Sigmoid colon (tissue), 7 donors: ENCODE measurements at regions of chr11 and their contacts with region 1.

Region 1: GRCh38 chr11:35144136-35144741 is 5.3 kb downstream of the CD44 start:
- DNase-seq: no peak
- H3K4me3 ChIP-seq: peak overlapping the region in 1 of 4 donors; percentile 4
- H3K27ac ChIP-seq: peak overlapping the region in 3 of 4 donors; percentile 36 to 93 (median 92)
- H3K4me1 ChIP-seq: peaks cover 0 to 76% (median 62%) of the 10 kb centered on the region in 4 donors
- H3K27me3 ChIP-seq: no peaks in the 10 kb centered on the region
- CTCF ChIP-seq: no peak
- EP300 ChIP-seq: no peak
- POLR2A ChIP-seq: no peak

Region 2: DNA sequence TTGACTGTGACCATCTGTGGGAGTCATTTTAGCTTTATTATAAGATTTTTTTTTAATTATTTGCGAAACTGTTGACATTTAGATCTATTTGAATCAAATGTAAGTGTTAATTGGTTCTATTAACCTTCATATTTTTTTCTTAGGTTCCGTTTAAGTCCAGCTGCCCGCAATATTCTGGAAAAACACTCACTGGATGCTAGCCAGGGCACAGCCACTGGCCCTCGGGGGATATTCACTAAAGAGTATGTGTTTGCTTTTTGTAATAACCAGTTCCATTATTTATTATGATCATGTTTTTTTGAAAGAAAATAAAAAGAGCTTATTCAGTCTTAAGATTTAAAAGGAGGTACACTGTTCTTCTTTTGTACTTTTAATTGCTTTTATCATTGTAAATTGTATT is 184.0 kb before region 1 on chr11:
- intact Hi-C with region 1: no loop called
- DNase-seq: no peak
- H3K4me3 ChIP-seq: no peak overlapping the region
- H3K27ac ChIP-seq: no peak overlapping the region
- H3K4me1 ChIP-seq: no peaks in the 10 kb centered on the region
- H3K27me3 ChIP-seq: no peaks in the 10 kb centered on the region
- CTCF ChIP-seq: no peak
- EP300 ChIP-seq: no peak
- POLR2A ChIP-seq: no peak

Region 3: DNA sequence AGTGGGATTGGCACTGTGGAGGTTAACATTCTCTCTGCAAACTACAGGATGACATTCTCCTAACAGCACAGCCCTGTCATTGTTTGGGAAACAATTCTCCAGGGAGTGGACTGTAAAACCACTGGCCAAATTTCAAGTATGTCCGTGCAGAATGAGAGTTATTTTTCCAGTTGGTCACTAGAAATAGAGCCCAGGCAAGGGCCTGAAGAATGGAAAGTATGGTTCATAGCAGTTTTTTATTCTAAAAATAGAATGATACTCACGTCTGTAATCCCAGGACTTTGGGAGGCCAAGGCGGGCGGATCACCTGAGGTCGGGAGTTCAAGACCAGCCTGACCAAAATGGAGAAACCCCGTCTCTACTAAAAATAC is 44.2 kb before region 1 on chr11:
- intact Hi-C with region 1: loop called (anchors 5 kb)
- DNase-seq: no peak
- H3K4me3 ChIP-seq: no peak overlapping the region
- H3K27ac ChIP-seq: peak overlapping the region; percentile 74 to 90 (median 80)
- H3K4me1 ChIP-seq: peaks cover 0 to 54% (median 39%) of the 10 kb centered on the region in 4 donors
- H3K27me3 ChIP-seq: no peaks in the 10 kb centered on the region
- CTCF ChIP-seq: no peak
- EP300 ChIP-seq: peak in 3 of 4 donors; percentile 46 to 58 (median 56)
- POLR2A ChIP-seq: no peak

Region 4: DNA sequence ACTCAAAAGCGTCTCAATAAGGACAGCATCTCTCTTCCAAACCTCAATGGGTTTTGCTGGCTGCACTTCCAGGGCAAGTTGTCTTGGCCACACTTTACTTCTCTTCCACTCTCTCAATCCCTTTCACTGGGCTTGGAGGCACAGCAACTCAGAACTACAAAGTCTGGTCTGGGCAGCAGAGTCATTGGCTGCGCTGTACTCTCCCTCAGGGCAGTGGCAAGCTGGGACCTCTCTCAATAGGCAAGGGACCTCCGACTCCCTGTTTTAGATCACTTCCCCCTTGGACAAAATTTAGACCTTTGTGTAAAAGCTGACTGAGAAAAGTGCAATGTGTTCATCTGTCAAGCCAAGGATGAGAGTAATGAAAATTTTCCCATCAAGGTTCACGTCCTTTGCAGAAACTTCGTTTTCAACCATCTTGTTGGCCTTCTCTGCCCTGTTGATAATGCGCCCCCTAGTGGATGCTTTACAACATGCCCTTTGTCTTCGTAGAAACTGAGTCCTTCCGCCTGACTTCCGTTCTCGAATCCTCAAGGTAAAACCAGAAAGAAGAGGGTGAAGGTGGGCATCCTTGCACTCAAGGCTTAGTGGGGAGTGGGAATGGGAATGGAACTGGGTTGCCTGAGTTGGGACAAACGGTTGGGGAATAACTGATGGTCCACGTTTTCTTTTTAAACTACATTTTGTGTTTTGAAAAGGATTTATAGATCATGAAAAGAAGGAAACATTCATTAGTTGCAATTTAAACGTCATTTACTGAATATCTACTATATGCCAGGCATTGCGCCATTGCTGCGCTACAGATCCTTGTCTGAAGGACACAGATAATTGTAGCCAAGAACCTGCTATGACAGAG is 93.8 kb after region 1 on chr11:
- intact Hi-C with region 1: loop called (anchors 5 kb)
- DNase-seq: no peak
- H3K4me3 ChIP-seq: no peak overlapping the region
- H3K27ac ChIP-seq: no peak overlapping the region
- H3K4me1 ChIP-seq: peaks cover 0 to 28% (median 12%) of the 10 kb centered on the region in 4 donors
- H3K27me3 ChIP-seq: no peaks in the 10 kb centered on the region
- CTCF ChIP-seq: peak in 3 of 4 experiments; percentile 46 to 60 (median 49)
- EP300 ChIP-seq: no peak
- POLR2A ChIP-seq: no peak

Region 5: DNA sequence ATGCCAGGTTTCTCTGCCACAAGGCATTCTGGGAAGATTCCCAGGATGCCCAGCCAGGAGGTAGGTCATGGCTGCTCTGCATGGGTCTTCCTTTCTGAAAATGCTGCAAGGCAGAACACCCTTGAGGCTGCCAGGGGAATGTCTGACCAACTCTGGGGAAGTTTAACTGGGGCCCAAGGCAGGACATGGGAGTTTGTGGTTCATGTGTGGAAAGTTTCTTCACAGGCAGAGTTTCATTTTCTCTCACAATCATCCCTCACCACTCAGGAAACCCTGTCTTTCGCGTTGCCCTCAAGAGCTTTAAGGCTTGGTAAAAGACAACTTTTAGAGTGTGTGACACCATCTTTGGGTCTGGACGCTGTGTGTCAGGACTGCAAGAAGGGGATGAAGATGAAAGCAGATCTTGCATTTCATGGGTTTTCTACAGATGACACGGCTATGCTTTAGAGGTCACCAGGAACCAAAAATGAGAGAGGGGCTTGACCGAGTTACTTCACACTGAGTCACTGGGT is 128.2 kb after region 1 on chr11:
- intact Hi-C with region 1: no loop called
- DNase-seq: no peak
- H3K4me3 ChIP-seq: no peak overlapping the region
- H3K27ac ChIP-seq: no peak overlapping the region
- H3K4me1 ChIP-seq: peaks cover 0 to 18% (median 16%) of the 10 kb centered on the region in 4 donors
- H3K27me3 ChIP-seq: no peaks in the 10 kb centered on the region
- CTCF ChIP-seq: no peak
- EP300 ChIP-seq: no peak
- POLR2A ChIP-seq: no peak

Region 6: DNA sequence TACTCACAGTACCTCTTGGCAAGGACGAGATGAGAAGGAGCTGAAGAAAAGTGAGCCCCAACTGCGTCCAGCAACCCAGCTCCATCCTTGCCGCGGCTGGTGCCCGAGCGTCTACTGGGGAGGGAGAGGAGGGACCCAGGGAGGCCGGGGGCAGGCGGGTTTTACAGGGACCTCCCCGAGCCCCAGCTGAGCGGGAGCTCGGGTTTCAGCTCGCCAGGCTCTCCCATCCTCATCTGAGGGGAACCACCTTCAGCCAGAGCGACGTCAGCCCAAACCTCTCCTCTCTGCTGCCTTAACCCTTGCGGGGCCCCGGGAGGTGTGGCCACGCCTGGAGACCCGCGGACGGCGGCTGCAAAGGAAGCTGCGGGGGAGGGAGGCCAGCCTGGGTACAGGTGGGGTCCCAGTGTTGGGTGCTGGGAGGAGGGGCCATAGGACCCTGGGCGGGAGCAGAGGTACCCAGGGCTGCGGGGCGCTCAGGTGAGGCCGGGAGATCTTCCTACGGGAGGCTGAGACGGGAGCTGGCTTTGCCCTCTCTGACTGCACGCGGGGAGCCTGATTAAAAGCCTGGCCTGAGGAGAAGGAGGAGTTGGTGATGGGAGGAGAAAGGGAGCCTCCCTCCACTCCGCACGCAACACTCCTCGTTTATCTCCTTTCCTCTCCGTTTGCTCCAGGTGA is 381.4 kb after region 1 on chr11 and contains the start of gene PAMR1:
- intact Hi-C with region 1: no loop called
- DNase-seq: peak; percentile 89
- H3K4me3 ChIP-seq: peak within 1 kb of the TSS; percentile 31 to 49 (median 38)
- H3K27ac ChIP-seq: peak within 1 kb of the TSS; percentile 4 to 62 (median 54)
- H3K4me1 ChIP-seq: peaks cover 0 to 50% (median 30%) of the 10 kb centered on the region in 4 donors
- H3K27me3 ChIP-seq: peaks cover 0 to 9% (median 7%) of the 10 kb centered on the region in 3 donors
- CTCF ChIP-seq: no peak
- EP300 ChIP-seq: no peak
- POLR2A ChIP-seq: peak in 1 of 2 donors; percentile 56
- total RNA-seq, gene PAMR1: 7.8 to 26.5 (median 17.2) TPM